Activated T-helper 2 cell treated with anti-CD3 and anti-CD28 coated beads, Interferon-gamma antibody, Interleukin-2, Interleukin-4, amounts not matched to agents 10 μg/mL and 5 μg/mL and 100 μg/mL, durations not matched to agents 14 hours and 24 hours and 36 hours (primary cell): ENCODE measurements at regions of chr15 and their contacts with region 1.

Region 1: DNA sequence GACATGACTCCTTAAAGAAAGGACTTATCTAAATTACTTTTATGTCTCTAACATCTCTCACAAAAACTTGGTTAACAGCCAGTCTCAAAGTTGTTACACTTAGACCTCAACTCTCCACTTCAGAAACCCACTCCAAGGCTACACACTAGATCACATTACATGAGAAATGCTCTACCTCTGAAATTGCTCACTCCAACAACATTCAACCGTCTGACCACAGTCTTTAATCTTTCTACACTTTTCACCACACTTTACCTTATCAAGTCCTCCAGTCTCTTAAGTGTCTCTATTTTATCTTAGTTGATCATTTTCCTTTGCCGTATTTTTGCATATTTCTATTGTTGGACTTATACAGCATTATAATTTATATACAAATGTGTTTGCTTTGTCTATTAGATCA is 5.8 kb downstream of the SLC12A6 start:
- DNase-seq: no peak
- H3K4me3 Mint-ChIP-seq: peak overlapping the region; percentile 38
- H3K27ac Mint-ChIP-seq: peak overlapping the region; percentile 85
- H3K4me1 Mint-ChIP-seq: peaks cover 72% of the 10 kb centered on the region
- H3K27me3 Mint-ChIP-seq: no peaks in the 10 kb centered on the region

Region 2: DNA sequence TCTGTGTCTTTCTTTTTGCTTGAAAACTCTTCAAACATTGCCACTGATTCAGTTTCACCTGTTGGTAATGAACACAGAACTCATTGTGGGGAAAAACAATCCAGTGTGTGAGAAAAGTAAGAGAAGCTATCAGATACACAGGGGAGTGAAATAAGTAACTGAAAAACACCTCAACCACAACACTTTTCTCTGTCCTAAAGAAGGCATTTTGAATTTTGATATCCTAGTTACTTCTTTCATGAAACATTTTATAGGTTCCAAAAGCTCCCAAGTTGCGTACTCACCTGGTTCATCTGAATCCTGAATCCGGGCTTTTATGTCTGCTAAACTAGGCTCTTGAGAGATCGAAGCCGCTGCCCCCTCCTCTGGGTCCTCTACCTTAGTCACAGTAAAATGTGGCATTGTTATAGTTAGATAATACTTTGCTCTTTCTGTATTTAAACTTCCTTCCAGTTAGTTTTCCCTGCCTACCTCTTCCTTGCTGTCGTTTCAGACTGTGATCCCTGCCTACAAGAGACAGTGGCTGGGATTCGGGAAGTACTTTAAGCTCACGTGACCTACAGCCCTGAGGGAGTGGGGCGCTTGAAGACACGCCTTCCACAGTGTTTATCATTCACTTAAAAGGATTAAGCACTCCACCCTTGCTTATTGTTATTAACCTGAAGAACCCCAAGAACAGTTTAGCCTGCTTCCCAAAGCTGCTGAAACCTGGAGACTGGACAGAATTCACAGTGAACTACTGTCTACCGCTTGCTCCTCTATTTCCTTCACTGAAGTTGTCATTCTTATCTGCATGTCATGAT is 13.3 kb before region 1 on chr15:
- intact Hi-C with region 1: loop called (anchors 1 kb)
- DNase-seq: no peak
- H3K4me3 Mint-ChIP-seq: peak overlapping the region; percentile 95
- H3K27ac Mint-ChIP-seq: peak overlapping the region; percentile 95
- H3K4me1 Mint-ChIP-seq: peaks cover 55% of the 10 kb centered on the region
- H3K27me3 Mint-ChIP-seq: no peaks in the 10 kb centered on the region

Region 3: GRCh38 chr15:34437687-34438086 is 105.9 kb after region 1 on chr15 and contains the start of gene GOLGA8A:
- intact Hi-C with region 1: loop called (anchors 5 kb)
- DNase-seq: peak; percentile 79
- H3K4me3 Mint-ChIP-seq: peak within 1 kb of the TSS; percentile 92
- H3K27ac Mint-ChIP-seq: peak within 1 kb of the TSS; percentile 95
- H3K4me1 Mint-ChIP-seq: peaks cover 20% of the 10 kb centered on the region
- H3K27me3 Mint-ChIP-seq: peaks cover 14% of the 10 kb centered on the region
- total RNA-seq, gene GOLGA8A: 238 and 258 TPM in 2 replicates

Region 4: GRCh38 chr15:34993877-34994276 is 662.1 kb after region 1 on chr15:
- intact Hi-C with region 1: loop called (anchors 5 kb)
- DNase-seq: peak; percentile 37
- H3K4me3 Mint-ChIP-seq: peak overlapping the region; percentile 51
- H3K27ac Mint-ChIP-seq: peak overlapping the region; percentile 88
- H3K4me1 Mint-ChIP-seq: peaks cover 39% of the 10 kb centered on the region
- H3K27me3 Mint-ChIP-seq: peaks cover 7% of the 10 kb centered on the region

Region 5: GRCh38 chr15:35665896-35666536 is 1334.2 kb after region 1 on chr15:
- intact Hi-C with region 1: no loop called
- DNase-seq: no peak
- H3K4me3 Mint-ChIP-seq: no peak overlapping the region
- H3K27ac Mint-ChIP-seq: no peak overlapping the region
- H3K4me1 Mint-ChIP-seq: no peaks in the 10 kb centered on the region
- H3K27me3 Mint-ChIP-seq: no peaks in the 10 kb centered on the region